ENCODE measurements at regions of chr17 and their contacts with region 1.

Region 1: GRCh38 chr17:1260086-1260769 is 10.0 kb upstream of the BHLHA9 start:
- DNase-seq: no peak
- ATAC-seq: peak; percentile 40
- H3K4me3 ChIP-seq: peak overlapping the region; percentile 79
- H3K27ac ChIP-seq: no peak overlapping the region
- H3K4me1 ChIP-seq: no peaks in the 10 kb centered on the region
- H3K27me3 ChIP-seq: peaks cover 5% of the 10 kb centered on the region
- CTCF ChIP-seq: no peak
- POLR2A ChIP-seq: no peak
- RAD21 ChIP-seq: no peak

Region 2: GRCh38 chr17:1122533-1123392 is 137.5 kb before region 1 on chr17:
- CTCF ChIA-PET with region 1: no interaction called
- POLR2A ChIA-PET with region 1: no interaction called
- dilution Hi-C with region 1: no loop called
- in situ Hi-C with region 1: no loop called
- intact Hi-C with region 1: loop called (anchors 1 kb)
- DNase-seq: peak; percentile 58
- ATAC-seq: peak; percentile 99
- H3K4me3 ChIP-seq: no peak overlapping the region
- H3K27ac ChIP-seq: no peak overlapping the region
- H3K4me1 ChIP-seq: no peaks in the 10 kb centered on the region; the same call in 1 of the 2 replicates
- H3K27me3 ChIP-seq: no peaks in the 10 kb centered on the region
- CTCF ChIP-seq: peak; percentile 92
- POLR2A ChIP-seq: no peak
- RAD21 ChIP-seq: peak; percentile 95

Region 3: DNA sequence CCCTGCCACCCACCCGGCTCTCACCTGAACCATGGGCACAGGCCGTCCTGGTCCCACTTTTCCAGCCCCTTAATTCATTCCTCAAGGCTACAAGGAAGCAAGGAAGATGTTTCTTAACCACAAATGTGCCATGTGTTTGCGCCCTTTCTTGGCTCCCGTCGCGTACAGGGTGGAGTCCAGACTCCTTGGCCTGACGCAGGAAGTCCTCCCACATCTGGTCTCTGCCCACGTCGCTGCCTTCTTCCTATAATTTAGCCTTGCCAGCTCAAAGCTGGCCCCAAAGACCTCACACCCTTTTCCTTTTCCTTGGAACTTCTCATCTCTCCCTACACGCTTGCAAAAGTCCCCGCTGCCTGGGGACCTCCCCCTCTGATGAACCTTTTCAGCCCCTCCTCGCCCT is 28.8 kb before region 1 on chr17:
- CTCF ChIA-PET with region 1: no interaction called
- POLR2A ChIA-PET with region 1: no interaction called
- dilution Hi-C with region 1: no loop called
- in situ Hi-C with region 1: no loop called
- intact Hi-C with region 1: no loop called
- DNase-seq: no peak
- ATAC-seq: no peak
- H3K4me3 ChIP-seq: no peak overlapping the region
- H3K27ac ChIP-seq: no peak overlapping the region
- H3K4me1 ChIP-seq: peaks cover 4% of the 10 kb centered on the region
- H3K27me3 ChIP-seq: peaks cover 46% of the 10 kb centered on the region
- CTCF ChIP-seq: no peak
- POLR2A ChIP-seq: no peak
- RAD21 ChIP-seq: no peak

Region 4: DNA sequence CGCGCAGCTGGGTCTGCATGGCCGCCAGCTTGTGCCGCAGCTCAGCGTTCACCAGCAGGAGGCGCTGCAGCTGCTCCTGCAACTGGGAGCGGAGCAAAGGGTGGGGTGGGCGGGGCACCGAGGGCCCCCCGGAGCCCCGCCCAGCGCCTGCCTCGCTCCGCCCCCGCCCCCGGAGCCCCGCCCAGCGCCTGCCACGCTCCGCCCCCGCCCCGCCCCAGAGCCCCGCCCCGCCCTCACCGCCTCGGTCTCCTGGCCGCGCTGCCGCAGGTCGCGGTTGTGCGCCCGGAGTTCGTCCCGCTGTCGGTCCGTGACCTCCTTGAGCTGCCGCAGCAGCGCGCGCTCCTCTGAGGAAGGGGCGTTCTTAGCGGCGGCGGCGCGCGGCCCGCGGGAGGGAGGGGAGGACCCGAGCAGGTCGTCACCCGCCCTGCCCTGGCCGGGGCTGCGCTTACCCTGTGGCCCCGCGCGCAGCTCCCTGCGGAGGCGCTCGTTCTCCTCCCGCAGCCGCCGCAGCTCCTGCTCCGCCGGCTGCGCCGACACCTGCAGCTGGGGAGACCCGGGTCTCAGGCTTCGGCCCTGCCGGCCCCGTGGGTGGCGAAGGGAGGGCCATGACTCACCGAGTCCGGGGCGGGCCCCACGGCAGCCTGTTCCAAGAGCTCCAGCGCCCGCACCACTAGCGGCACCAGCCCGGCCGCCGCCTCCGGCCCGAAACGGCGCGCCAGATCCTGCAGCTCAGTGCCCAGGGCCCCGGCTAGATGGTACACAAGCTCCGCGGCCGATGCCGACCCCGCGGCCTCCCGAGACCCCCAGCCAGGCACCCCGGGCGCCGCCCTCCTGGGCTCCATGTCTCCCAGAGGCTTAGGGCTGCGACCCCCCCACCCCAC is 389.0 kb after region 1 on chr17:
- CTCF ChIA-PET with region 1: no interaction called
- POLR2A ChIA-PET with region 1: interaction called, 4 read pairs
- dilution Hi-C with region 1: no loop called
- in situ Hi-C with region 1: no loop called
- intact Hi-C with region 1: loop called (anchors 5 kb)
- DNase-seq: peak; percentile 94
- ATAC-seq: peak; percentile 82
- H3K4me3 ChIP-seq: peak overlapping the region; percentile 83
- H3K27ac ChIP-seq: peak overlapping the region; percentile 62
- H3K4me1 ChIP-seq: peaks cover 22% of the 10 kb centered on the region
- H3K27me3 ChIP-seq: no peaks in the 10 kb centered on the region
- CTCF ChIP-seq: peak; percentile 99
- POLR2A ChIP-seq: peak; percentile 57
- RAD21 ChIP-seq: 0 out of 2 replicates have a peak, but pooled peaks have one; percentile 81

Measured in IMR-90 (cell line).